ENCODE measurements at regions of chr18 and their contacts with region 1.

Region 1: DNA sequence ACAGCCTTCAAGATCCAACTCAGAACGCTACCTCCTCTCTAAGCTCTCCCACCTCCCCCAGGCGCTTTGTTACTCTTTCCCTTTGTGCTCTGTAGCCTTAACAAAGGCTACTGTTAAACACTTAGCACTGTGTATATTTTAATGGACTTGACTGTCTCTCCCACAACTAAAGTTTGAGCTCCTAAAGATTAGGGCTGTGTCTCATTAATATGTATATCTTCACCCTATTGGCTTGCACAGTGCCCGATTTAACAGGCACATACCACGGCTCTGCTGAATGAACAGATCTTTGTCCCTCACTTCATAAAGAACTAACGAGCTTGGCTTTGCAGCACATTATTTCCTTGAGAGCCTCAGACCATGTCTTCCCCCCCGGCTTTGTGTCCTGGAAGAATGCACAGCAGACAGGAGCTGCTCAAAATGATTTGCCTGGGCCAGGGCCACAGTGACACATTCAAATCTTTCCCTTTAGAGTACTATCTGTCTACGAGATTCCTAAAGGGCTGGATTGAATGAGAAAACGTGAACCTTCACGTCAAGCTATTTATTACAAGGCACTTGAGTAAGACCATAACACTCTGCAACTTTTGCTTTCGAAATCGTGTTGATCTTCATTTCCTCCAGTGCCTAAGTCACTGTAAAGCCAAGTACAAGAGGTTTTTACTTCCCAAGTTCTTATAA is 22.1 kb downstream of the ABHD3 start:
- DNase-seq: peak; percentile 62
- ATAC-seq: peak; percentile 50
- H3K4me3 ChIP-seq: peak overlapping the region; percentile 35 to 68 (median 56)
- H3K4me3 Mint-ChIP-seq: no peak overlapping the region
- H3K27ac ChIP-seq: peak overlapping the region; percentile 52 to 74
- H3K27ac Mint-ChIP-seq: no peak overlapping the region
- H3K4me1 ChIP-seq: peaks cover 28 to 30% of the 10 kb centered on the region in 2 donors
- H3K4me1 Mint-ChIP-seq: peaks cover 20% of the 10 kb centered on the region
- H3K27me3 ChIP-seq: no peaks in the 10 kb centered on the region
- H3K27me3 Mint-ChIP-seq: no peaks in the 10 kb centered on the region
- CTCF ChIP-seq: no peak

Region 2: GRCh38 chr18:21600526-21601410 is 81.7 kb before region 1 on chr18 and contains the start of gene ESCO1:
- CTCF ChIA-PET with region 1: interaction called, 13 read pairs
- POLR2A ChIA-PET with region 1: interaction called, 5 read pairs
- intact Hi-C with region 1: no loop called
- DNase-seq: peak; percentile 99
- ATAC-seq: peak; percentile 79
- H3K4me3 ChIP-seq: peak within 1 kb of the TSS; percentile 66 to 99 (median 92)
- H3K4me3 Mint-ChIP-seq: peak within 1 kb of the TSS; percentile 99
- H3K27ac ChIP-seq: peak within 1 kb of the TSS; percentile 99
- H3K27ac Mint-ChIP-seq: peak within 1 kb of the TSS; percentile 100
- H3K4me1 ChIP-seq: peaks cover 37 to 39% of the 10 kb centered on the region in 2 donors
- H3K4me1 Mint-ChIP-seq: peaks cover 47% of the 10 kb centered on the region
- H3K27me3 ChIP-seq: no peaks in the 10 kb centered on the region
- H3K27me3 Mint-ChIP-seq: no peaks in the 10 kb centered on the region
- CTCF ChIP-seq: peak; percentile 99
- total RNA-seq, gene ESCO1: 30.0 and 31.2 TPM in 2 replicates

Region 3: GRCh38 chr18:21612125-21612991 is 70.2 kb before region 1 on chr18 and contains the start of gene SNRPD1:
- CTCF ChIA-PET with region 1: interaction called, 7 read pairs
- POLR2A ChIA-PET with region 1: no interaction called
- intact Hi-C with region 1: loop called (anchors 1 kb)
- DNase-seq: peak; percentile 92
- ATAC-seq: peak; percentile 99
- H3K4me3 ChIP-seq: peak within 1 kb of the TSS; percentile 68 to 94 (median 85)
- H3K4me3 Mint-ChIP-seq: peak within 1 kb of the TSS; percentile 99
- H3K27ac ChIP-seq: peak within 1 kb of the TSS; percentile 87 to 89
- H3K27ac Mint-ChIP-seq: peak within 1 kb of the TSS; percentile 98
- H3K4me1 ChIP-seq: peaks cover 13 to 22% of the 10 kb centered on the region in 2 donors
- H3K4me1 Mint-ChIP-seq: peaks cover 33% of the 10 kb centered on the region
- H3K27me3 ChIP-seq: no peaks in the 10 kb centered on the region
- H3K27me3 Mint-ChIP-seq: no peaks in the 10 kb centered on the region
- CTCF ChIP-seq: peak; percentile 90
- total RNA-seq, gene SNRPD1: 22.1 and 23.9 TPM in 2 replicates

Region 4: DNA sequence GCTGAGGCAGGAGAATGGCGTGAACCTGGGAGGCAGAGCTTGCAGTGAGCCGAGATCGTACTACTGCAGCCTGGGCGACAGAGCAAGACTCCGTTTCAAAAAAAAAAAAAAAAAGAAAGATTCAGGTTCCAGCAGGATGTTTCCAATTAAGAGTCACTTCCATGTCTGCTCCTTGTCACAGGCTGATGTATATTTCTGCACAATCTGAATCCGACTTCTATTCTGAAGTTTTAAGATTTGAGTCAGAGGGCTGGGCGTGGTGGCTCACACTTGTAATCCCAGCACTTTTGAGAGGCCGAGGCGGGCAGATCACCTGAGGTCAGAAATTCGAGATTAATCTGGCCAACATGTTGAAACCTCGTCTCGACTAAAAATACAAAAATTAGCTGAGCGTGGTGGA is 45.7 kb before region 1 on chr18:
- CTCF ChIA-PET with region 1: interaction called, 3 read pairs
- POLR2A ChIA-PET with region 1: no interaction called
- intact Hi-C with region 1: loop called (anchors 5 kb)
- DNase-seq: no peak
- ATAC-seq: no peak
- H3K4me3 ChIP-seq: no peak overlapping the region
- H3K4me3 Mint-ChIP-seq: no peak overlapping the region
- H3K27ac ChIP-seq: no peak overlapping the region
- H3K27ac Mint-ChIP-seq: no peak overlapping the region
- H3K4me1 ChIP-seq: peaks cover 0 to 7% of the 10 kb centered on the region in 2 donors
- H3K4me1 Mint-ChIP-seq: peaks cover 13% of the 10 kb centered on the region
- H3K27me3 ChIP-seq: no peaks in the 10 kb centered on the region
- H3K27me3 Mint-ChIP-seq: no peaks in the 10 kb centered on the region
- CTCF ChIP-seq: no peak

Region 5: GRCh38 chr18:21704603-21705364 is 22.3 kb after region 1 on chr18 and contains the start of gene ABHD3:
- CTCF ChIA-PET with region 1: interaction called, 4 read pairs
- POLR2A ChIA-PET with region 1: interaction called, 5 read pairs
- intact Hi-C with region 1: loop called (anchors 1 kb)
- DNase-seq: peak; percentile 93
- ATAC-seq: peak; percentile 93
- H3K4me3 ChIP-seq: peak within 1 kb of the TSS; percentile 66 to 87 (median 69)
- H3K4me3 Mint-ChIP-seq: peak within 1 kb of the TSS; percentile 98
- H3K27ac ChIP-seq: peak within 1 kb of the TSS; percentile 82 to 92
- H3K27ac Mint-ChIP-seq: peak within 1 kb of the TSS; percentile 95
- H3K4me1 ChIP-seq: peaks cover 10 to 11% of the 10 kb centered on the region in 2 donors
- H3K4me1 Mint-ChIP-seq: peaks cover 20% of the 10 kb centered on the region
- H3K27me3 ChIP-seq: no peaks in the 10 kb centered on the region
- H3K27me3 Mint-ChIP-seq: no peaks in the 10 kb centered on the region
- CTCF ChIP-seq: peak; percentile 58
- total RNA-seq, gene ABHD3: 27.6 and 32.8 TPM in 2 replicates

Region 6: GRCh38 chr18:21740724-21741510 is 58.4 kb after region 1 on chr18 and contains the start of gene MIB1:
- CTCF ChIA-PET with region 1: interaction called, 3 read pairs
- POLR2A ChIA-PET with region 1: no interaction called
- intact Hi-C with region 1: loop called (anchors 2 kb)
- DNase-seq: peak; percentile 98
- ATAC-seq: peak; percentile 64
- H3K4me3 ChIP-seq: peak within 1 kb of the TSS; percentile 51 to 98 (median 94)
- H3K4me3 Mint-ChIP-seq: peak within 1 kb of the TSS; percentile 95
- H3K27ac ChIP-seq: peak within 1 kb of the TSS; percentile 86
- H3K27ac Mint-ChIP-seq: peak within 1 kb of the TSS; percentile 97
- H3K4me1 ChIP-seq: peaks cover 9 to 13% of the 10 kb centered on the region in 2 donors
- H3K4me1 Mint-ChIP-seq: peaks cover 30% of the 10 kb centered on the region
- H3K27me3 ChIP-seq: no peaks in the 10 kb centered on the region
- H3K27me3 Mint-ChIP-seq: no peaks in the 10 kb centered on the region
- CTCF ChIP-seq: no peak
- total RNA-seq, gene MIB1: 24.4 and 25.5 TPM in 2 replicates

Measured in B cell (primary cell).